Activated CD8-positive, alpha-beta memory T cell treated with anti-CD3 and anti-CD28 coated beads, Interleukin-2, amount 10 ng/mL, durations not matched to agents 7 days and 5 days (primary cell): ENCODE measurements at regions of chr14 and their contacts with region 1.

Region 1: DNA sequence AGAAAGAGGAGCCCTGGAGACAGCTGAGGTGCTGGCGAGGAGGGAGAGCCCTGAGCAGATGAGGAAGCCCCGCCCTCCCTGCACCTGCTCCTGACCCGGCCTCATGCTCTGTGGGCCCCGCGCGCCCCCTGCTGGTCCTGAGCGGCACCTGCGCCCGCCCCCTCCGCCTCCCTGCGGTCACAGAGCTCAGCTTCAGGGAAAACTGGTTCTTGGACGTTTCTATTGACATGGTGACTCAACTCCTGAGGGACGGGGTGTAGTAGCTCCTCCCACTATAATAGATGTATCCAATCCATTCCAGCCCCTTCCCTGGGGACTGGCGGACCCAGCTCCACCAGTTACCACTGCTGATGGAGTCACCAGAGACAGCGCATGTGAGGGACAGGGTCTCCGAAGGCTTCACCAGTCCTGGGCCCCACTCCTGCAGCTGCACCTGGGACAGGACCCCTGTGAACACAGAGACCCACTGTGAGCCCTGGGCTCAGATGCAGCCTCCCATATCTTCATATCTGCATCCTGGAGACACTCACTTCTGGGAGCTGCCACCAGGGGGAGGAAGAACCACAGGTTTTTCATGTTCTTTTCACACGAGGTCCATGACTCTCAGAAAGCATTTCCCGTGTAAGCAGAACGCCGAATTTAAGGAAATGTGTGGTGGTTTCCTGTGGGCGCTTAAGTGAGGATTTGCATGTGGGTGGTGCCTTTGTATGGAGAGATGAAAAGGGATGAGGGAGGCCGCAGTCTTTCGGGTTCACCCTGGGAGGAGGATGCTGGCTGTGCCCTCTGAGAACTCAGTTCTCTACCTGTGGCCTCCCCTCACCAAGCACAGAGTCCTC is 1346.4 kb downstream of the TMEM121 start:
- DNase-seq: peak; percentile 87
- ATAC-seq: peak; percentile 80
- H3K4me3 Mint-ChIP-seq: no peak overlapping the region
- H3K27ac Mint-ChIP-seq: no peak overlapping the region
- H3K4me1 Mint-ChIP-seq: peaks cover 23% of the 10 kb centered on the region
- H3K27me3 Mint-ChIP-seq: peaks cover 37% of the 10 kb centered on the region

Region 2: DNA sequence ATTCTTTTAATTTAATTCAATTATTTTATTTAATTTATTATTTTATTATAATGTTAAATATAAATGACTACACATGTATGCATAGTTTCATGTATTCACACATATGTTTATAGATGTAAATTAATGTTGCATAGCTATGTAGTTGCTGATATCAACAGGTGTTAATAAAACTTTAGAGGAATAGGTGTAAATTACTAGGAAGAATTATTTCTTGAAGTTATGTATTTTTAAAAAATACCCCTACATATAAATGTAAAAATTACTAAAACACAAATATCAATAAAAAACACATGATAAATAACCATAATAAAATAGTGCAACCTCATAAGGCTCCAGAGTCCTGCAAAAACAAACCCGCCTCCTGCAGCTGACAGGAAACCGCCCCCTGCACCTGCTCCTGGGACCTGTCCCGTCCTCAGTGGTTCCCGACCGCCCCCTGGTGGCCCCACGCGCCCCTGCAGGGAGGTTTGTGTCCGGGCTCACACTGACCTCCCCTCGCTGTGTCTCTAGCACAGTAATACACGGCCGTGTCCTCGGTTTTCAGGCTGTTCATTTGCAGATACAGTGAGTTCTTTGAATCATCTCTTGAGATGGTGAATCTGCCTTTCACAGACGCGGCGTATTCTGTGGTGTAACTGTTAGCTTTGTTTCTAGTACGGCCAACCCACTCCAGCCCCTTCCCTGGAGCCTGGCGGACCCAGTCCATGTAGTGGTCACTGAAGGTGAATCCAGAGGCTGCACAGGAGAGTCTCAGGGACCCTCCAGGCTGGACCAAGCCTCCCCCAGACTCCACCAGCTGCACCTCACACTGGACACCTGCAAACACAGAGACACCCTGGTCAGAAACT is 82.4 kb before region 1 on chr14:
- CTCF ChIA-PET with region 1: interaction called, 14 read pairs
- DNase-seq: peak; percentile 85
- ATAC-seq: peak; percentile 65
- H3K4me3 Mint-ChIP-seq: no peak overlapping the region
- H3K27ac Mint-ChIP-seq: no peak overlapping the region
- H3K4me1 Mint-ChIP-seq: peaks cover 10% of the 10 kb centered on the region
- H3K27me3 Mint-ChIP-seq: peaks cover 27% of the 10 kb centered on the region

Region 3: GRCh38 chr14:106823552-106823951 is 49.3 kb before region 1 on chr14:
- CTCF ChIA-PET with region 1: interaction called, 12 read pairs
- DNase-seq: no peak
- ATAC-seq: no peak
- H3K4me3 Mint-ChIP-seq: no peak overlapping the region
- H3K27ac Mint-ChIP-seq: no peak overlapping the region
- H3K4me1 Mint-ChIP-seq: no peaks in the 10 kb centered on the region
- H3K27me3 Mint-ChIP-seq: peaks cover 36% of the 10 kb centered on the region

Region 4: DNA sequence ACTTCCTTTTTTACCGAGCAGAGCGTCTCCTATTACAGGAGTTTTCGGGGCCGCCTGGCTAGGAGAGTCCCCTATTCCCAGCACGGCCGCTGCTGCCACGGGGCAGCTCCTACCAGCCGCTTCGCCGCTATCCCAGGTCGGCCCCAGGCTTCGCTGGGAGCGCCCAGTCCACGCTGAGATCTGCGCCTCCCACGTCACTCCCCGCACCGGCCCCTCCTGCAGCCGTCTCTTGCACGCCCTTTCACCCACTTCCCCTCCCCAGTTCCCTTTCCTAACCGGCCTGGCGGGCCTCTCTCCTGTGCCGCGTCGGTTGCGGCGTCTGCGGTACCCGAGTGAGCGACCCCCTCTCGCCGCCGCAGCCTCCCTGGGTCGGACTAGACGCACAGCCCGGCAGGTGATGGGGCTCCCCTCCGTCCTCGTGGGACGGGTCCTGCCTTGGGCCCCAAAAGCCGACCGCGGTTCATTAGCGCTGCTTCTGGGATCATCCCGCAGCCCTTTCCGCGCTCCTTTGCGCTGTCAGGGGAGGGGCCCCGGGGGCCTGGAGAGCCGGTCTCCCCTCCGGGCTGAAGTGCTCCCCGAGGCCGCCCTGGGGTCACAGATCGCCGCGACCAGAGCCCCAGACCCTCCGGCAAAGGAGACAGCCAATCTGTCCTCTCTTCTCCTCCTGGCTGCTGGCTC is 28.1 kb before region 1 on chr14:
- CTCF ChIA-PET with region 1: interaction called, 31 read pairs
- DNase-seq: peak; percentile 68
- ATAC-seq: peak; percentile 78
- H3K4me3 Mint-ChIP-seq: peak overlapping the region; percentile 77
- H3K27ac Mint-ChIP-seq: peak overlapping the region; percentile 58
- H3K4me1 Mint-ChIP-seq: peaks cover 15% of the 10 kb centered on the region
- H3K27me3 Mint-ChIP-seq: peaks cover 40% of the 10 kb centered on the region

Region 5: DNA sequence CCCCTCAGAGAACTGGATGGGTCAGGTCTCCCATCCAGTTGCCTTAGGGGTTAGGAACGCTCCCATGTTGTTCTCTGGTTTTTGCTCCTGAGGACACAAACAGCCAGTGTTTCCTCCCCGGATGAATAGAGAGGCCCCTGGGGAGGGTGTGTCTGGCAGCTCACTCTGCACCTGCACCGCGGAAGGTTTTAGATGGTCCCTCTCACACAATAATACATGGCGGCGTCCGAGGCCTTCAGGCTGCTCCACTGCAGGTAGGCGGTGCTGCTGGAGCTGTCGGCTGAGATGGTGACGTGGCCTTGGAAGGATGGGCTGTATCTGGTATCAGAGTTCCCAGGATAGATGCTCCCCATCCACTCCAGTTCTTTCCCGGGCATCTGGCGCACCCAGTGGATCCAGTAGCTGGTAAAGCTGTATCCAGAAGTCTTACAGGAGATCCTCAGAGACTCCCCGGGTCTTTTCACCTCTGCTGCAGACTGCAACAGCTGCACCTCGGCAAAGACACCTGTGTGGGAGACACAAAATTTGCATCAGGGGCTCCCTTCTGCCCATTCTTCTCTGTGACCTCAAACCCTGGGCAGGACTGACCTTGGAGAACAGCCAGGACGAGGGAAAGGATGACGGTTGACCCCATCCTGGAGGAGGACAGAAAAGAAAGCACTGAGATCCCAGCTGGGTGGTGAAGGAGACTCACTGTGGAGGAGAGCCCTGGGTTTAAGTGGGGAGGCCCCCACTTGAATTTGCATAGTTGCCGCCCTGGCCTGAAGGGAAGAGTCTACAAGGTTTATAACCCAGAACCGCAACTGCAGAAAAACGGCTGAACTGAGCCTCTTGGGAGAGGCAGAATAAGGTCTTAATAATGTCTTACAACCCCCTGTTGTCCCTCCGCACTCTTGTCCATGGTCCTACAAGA is 21.7 kb before region 1 on chr14:
- CTCF ChIA-PET with region 1: interaction called, 31 read pairs
- DNase-seq: no peak
- ATAC-seq: no peak
- H3K4me3 Mint-ChIP-seq: no peak overlapping the region
- H3K27ac Mint-ChIP-seq: no peak overlapping the region
- H3K4me1 Mint-ChIP-seq: no peaks in the 10 kb centered on the region
- H3K27me3 Mint-ChIP-seq: peaks cover 40% of the 10 kb centered on the region